ENCODE measurements at regions of chr11 and their contacts with region 1.

Region 1: GRCh38 chr11:65497141-65498041 is 1.5 kb upstream of the MALAT1 start:
- DNase-seq: peak; percentile 99
- H3K4me3 Mint-ChIP-seq: no peak overlapping the region
- H3K27ac Mint-ChIP-seq: no peak overlapping the region
- H3K4me1 Mint-ChIP-seq: peaks cover 38% of the 10 kb centered on the region
- H3K27me3 Mint-ChIP-seq: peaks cover 10% of the 10 kb centered on the region

Region 2: GRCh38 chr11:65321828-65322485 is 175.4 kb before region 1 on chr11:
- CTCF ChIA-PET with region 1: no interaction called
- POLR2A ChIA-PET with region 1: no interaction called
- intact Hi-C with region 1: no loop called
- DNase-seq: no peak
- H3K4me3 Mint-ChIP-seq: no peak overlapping the region
- H3K27ac Mint-ChIP-seq: no peak overlapping the region
- H3K4me1 Mint-ChIP-seq: no peaks in the 10 kb centered on the region
- H3K27me3 Mint-ChIP-seq: peaks cover 2% of the 10 kb centered on the region

Region 3: GRCh38 chr11:65382033-65382807 is 115.2 kb before region 1 on chr11 and contains the start of gene SLC25A45:
- CTCF ChIA-PET with region 1: interaction called, 3 read pairs
- POLR2A ChIA-PET with region 1: interaction called, 23 read pairs
- intact Hi-C with region 1: loop called (anchors 2 kb)
- DNase-seq: peak; percentile 97
- H3K4me3 Mint-ChIP-seq: peak within 1 kb of the TSS; percentile 85
- H3K27ac Mint-ChIP-seq: peak within 1 kb of the TSS; percentile 97
- H3K4me1 Mint-ChIP-seq: peaks cover 41% of the 10 kb centered on the region
- H3K27me3 Mint-ChIP-seq: no peaks in the 10 kb centered on the region
- total RNA-seq, gene SLC25A45: 14.4 to 16.1 TPM

Region 4: DNA sequence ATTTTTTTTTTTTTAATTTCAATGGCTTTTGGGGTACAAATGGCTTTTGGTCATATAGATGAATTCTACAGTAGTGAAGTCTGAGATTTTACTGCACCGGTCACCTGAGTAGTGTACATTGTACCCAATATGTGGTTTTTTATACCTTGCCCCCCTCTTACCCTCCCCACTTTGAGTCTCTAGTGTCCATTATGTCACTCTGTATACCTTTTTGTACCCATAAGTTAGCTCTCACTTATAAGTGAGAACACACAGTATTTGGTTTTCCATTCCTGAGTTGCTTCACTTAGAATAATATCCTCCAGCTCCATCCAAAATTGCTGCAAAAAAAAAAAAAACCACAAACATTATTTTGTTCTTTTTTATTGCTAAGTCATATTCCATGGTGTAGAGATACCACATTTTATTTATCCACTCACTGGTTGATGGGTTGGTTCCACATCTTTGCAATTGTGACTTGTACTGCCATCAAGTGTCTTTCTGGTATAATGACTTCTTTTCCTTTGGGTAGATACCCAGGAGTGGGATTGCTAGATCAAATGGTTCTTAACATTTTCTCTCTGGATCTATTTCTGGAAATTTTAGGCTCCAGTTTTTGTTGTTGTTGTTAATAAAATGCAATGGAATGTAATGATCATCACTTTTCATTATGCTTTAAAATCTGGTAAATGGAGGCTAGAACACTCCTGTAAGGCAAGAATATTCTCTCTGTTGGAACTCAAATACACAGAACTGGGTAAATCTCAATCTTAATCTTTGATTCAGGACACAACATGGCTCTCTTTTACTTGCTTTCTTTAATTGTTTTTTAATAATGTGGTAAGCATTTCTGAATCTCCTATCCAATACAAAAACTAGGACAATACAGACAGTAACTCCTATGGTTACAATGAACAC is 64.5 kb before region 1 on chr11:
- CTCF ChIA-PET with region 1: interaction called, 3 read pairs
- POLR2A ChIA-PET with region 1: interaction called, 4,089 read pairs
- intact Hi-C with region 1: no loop called
- DNase-seq: peak; percentile 5
- H3K4me3 Mint-ChIP-seq: peak overlapping the region; percentile 21
- H3K27ac Mint-ChIP-seq: peak overlapping the region; percentile 78
- H3K4me1 Mint-ChIP-seq: peaks cover 88% of the 10 kb centered on the region
- H3K27me3 Mint-ChIP-seq: no peaks in the 10 kb centered on the region

Region 5: GRCh38 chr11:65448418-65449105 is 48.8 kb before region 1 on chr11:
- CTCF ChIA-PET with region 1: no interaction called
- POLR2A ChIA-PET with region 1: interaction called, 30 read pairs
- intact Hi-C with region 1: no loop called
- DNase-seq: peak; percentile 28
- H3K4me3 Mint-ChIP-seq: no peak overlapping the region
- H3K27ac Mint-ChIP-seq: no peak overlapping the region
- H3K4me1 Mint-ChIP-seq: peaks cover 16% of the 10 kb centered on the region
- H3K27me3 Mint-ChIP-seq: no peaks in the 10 kb centered on the region

Region 6: GRCh38 chr11:65471410-65471762 is 26.0 kb before region 1 on chr11:
- CTCF ChIA-PET with region 1: interaction called, 41 read pairs
- POLR2A ChIA-PET with region 1: interaction called, 824 read pairs
- intact Hi-C with region 1: loop called (anchors 1 kb)
- DNase-seq: no peak
- H3K4me3 Mint-ChIP-seq: peak overlapping the region; percentile 67
- H3K27ac Mint-ChIP-seq: peak overlapping the region; percentile 99
- H3K4me1 Mint-ChIP-seq: peaks cover 29% of the 10 kb centered on the region
- H3K27me3 Mint-ChIP-seq: no peaks in the 10 kb centered on the region

Region 7: DNA sequence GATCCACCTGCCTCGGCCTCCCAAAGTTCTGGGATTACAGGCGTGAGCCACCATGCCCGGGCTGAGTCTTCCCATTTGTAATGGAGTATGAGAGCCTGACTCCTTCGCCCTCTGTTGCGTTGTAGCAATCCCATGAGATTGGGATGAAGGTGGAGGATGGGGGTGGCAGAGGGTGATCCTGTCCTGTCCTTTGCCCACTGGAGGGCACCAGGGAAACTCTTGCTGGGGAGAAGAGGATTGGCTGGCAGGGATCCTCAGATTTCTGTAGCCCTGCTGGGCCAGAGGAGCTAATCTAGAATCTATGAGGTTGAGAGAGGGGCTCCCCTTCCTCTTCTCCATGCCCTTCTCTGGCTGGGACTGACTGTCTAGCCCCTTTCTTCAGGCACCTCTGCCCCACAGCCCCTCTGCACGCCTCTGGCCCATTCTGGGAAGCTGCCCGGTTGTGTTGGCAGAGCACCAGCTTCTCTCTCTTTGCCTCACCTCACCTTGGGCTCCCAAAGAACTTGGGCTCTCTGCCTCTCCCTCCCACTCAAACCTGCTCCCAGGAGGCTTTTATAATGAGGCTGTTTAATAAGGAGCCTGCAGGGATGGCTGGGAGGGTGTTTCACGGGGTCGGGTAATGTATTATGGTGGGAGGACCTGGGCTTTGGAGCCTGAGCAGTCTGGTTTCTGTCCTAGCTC is 538.4 kb after region 1 on chr11:
- CTCF ChIA-PET with region 1: no interaction called
- POLR2A ChIA-PET with region 1: no interaction called
- intact Hi-C with region 1: no loop called
- DNase-seq: no peak
- H3K4me3 Mint-ChIP-seq: no peak overlapping the region
- H3K27ac Mint-ChIP-seq: no peak overlapping the region
- H3K4me1 Mint-ChIP-seq: no peaks in the 10 kb centered on the region
- H3K27me3 Mint-ChIP-seq: peaks cover 2% of the 10 kb centered on the region

Region 8: DNA sequence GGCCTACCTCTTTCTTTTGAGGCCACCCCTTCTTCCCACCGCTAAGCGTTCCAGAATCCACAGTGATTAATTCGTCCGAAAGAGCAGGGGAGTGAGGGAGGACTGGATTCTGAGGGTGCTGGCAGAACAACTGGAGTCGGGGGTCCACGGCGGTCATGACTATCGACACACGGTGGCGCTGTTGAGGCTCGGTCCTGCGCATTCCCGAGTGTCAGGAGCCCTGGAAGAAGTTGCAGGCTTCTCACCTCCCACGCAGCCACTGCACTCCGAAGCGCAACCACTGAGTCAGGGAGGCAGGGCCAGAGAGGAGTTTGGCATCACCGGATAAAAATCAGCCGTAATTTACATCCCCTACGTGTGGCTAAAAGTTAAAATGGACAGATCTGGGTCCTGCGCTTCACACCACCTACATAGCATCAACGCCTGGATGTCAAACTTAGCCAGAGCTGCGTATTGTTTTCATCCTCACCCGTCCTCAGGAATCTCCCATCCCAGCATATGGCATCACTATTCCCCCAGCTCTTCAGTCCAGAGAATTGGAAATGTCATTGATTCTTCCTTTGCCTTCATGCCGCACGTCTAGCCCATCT is 1081.7 kb after region 1 on chr11:
- CTCF ChIA-PET with region 1: no interaction called
- POLR2A ChIA-PET with region 1: no interaction called
- intact Hi-C with region 1: no loop called
- DNase-seq: peak; percentile 90
- H3K4me3 Mint-ChIP-seq: no peak overlapping the region
- H3K27ac Mint-ChIP-seq: peak overlapping the region; percentile 40
- H3K4me1 Mint-ChIP-seq: peaks cover 19% of the 10 kb centered on the region
- H3K27me3 Mint-ChIP-seq: no peaks in the 10 kb centered on the region